AG04450 (cell line): ENCODE measurements at regions of chr1 and their contacts with region 1.

Region 1: GRCh38 chr1:31984419-31985347 is 29.0 kb upstream of the KHDRBS1 start:
- DNase-seq: no peak
- H3K4me3 ChIP-seq: no peak overlapping the region
- H3K27ac ChIP-seq: peak overlapping the region; percentile 39
- H3K27me3 ChIP-seq: no peaks in the 10 kb centered on the region
- CTCF ChIP-seq: no peak

Region 2: DNA sequence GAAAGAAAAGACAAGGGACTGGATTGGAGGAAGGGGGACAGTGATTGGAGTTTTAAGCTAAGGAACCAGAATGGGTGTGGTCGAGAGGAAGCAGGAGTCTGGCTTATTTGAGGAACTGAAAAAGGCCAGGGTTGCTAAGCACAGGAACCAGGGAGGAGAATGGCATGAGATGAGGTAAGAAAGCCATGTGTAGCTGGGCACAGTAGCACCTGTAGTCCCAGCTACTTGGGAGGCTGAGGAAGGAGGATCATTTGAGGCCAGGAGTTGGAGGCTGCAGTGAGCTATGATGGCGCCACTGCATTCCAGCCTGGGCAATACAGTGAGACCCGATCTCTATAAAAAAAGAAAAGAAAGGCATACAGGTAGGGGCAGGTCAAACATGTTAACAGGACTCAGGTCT is 20.8 kb after region 1 on chr1:
- CTCF ChIA-PET with region 1: interaction called, 19 read pairs
- POLR2A ChIA-PET with region 1: interaction called, 3 read pairs
- DNase-seq: no peak
- H3K4me3 ChIP-seq: no peak overlapping the region
- H3K27ac ChIP-seq: no peak overlapping the region
- H3K27me3 ChIP-seq: no peaks in the 10 kb centered on the region
- CTCF ChIP-seq: no peak